CD8-positive, alpha-beta T cell (primary cell): ENCODE measurements at regions of chr11 and their contacts with region 1.

Region 1: DNA sequence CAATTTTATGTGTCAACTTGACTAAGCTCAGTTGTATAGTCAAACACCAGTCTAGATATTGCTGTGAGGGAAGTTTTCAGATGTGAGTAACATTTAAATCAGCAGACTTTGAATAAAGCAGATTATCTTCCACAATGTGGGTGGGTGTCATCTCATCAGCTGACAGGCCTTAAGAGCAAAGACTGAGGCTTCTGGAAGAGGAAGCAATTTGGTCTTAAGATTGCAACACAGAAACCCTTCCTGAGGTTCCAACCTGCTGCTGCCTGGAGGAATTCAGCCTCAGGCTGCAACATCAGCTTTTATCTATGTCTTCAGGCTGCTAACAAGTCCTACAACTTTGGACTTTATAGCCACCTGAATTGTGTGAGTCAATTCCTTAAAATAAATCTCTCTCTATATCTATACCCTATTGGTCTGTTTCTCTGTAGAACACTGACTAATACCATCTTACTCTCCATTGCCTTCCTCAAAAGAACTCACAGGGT is 277.2 kb upstream of the PLET1 start:
- DNase-seq: no peak
- ATAC-seq: no peak
- H3K4me3 ChIP-seq: no peak overlapping the region
- H3K4me3 Mint-ChIP-seq: no peak overlapping the region
- H3K27ac ChIP-seq: no peak overlapping the region
- H3K27ac Mint-ChIP-seq: no peak overlapping the region
- H3K4me1 ChIP-seq: peaks cover 5% of the 10 kb centered on the region
- H3K4me1 Mint-ChIP-seq: peaks cover 15% of the 10 kb centered on the region
- H3K27me3 ChIP-seq: no peaks in the 10 kb centered on the region
- H3K27me3 Mint-ChIP-seq: peaks cover 35% of the 10 kb centered on the region
- CTCF ChIP-seq: no peak

Region 2: DNA sequence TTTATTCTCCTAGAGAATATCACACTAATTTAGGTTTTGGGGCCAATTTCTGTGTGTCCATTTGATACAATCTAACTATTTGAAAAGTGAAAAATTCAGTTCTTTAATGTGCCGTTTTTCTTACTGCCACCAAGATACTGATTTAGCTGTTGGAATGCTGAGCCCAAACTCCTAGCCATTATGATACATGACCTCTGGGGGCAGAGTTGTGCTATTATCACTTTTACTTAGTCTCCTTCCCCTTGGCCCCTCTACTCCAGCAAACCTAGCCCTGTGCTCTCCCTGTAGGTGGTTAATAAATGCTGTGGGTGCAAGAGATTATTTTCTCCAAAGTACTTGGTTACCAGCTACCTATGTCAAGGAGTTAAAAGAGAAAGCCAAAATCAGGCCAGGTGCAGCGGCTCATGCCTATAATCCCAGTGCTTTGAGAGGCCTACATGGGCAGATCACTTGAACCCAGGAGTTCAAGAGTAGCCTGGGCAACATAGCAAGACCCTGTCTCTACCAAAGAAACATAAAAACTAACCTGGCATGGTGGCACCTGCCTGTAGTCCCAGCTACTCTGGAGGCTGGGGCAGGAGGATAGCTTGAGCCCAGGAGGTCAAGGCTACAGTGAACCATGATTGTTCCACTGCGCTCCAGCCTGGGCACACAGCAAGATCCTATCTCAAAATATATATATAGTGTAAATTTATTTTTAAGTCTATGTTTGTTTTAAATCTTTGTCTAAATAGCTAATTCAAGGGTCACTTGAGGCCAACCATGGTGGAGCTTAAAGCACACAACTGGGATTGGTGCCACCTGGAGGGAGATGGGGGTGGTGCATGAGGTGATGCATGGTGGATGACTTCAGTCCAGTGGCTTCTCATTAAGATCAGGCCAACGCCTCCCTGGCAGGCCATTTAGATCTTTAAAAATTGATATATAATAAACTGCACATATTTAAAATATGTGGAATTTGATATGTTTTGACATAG is 84.0 kb before region 1 on chr11:
- CTCF ChIA-PET with region 1: no interaction called
- POLR2A ChIA-PET with region 1: no interaction called
- intact Hi-C with region 1: no loop called
- DNase-seq: peak in 4 of 9 experiments; percentile 31 to 48 (median 36)
- ATAC-seq: no peak
- H3K4me3 ChIP-seq: no peak overlapping the region
- H3K4me3 Mint-ChIP-seq: no peak overlapping the region
- H3K27ac ChIP-seq: no peak overlapping the region
- H3K27ac Mint-ChIP-seq: no peak overlapping the region
- H3K4me1 ChIP-seq: no peaks in the 10 kb centered on the region
- H3K4me1 Mint-ChIP-seq: no peaks in the 10 kb centered on the region
- H3K27me3 ChIP-seq: no peaks in the 10 kb centered on the region
- H3K27me3 Mint-ChIP-seq: peaks cover 5% of the 10 kb centered on the region
- CTCF ChIP-seq: peak; percentile 18

Region 3: DNA sequence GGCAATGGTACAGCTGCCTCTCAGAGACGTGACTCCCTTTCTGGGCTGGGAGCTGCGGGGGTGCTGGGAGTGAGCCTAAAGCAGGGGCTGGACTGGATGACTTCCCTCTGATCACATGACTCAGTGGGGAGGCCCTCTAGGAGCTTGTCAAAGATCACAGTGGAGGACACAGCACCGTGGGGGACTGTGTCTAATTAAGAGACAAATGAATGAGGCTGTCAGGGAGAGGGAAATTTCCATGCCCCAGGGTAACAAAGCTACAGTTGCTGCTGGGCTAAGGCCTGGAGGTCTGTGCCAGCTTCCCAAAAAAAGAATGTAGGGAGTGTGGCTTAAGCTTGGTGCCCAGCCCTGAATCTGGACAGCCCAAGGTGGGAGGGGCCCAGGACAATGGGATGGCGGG is 14.4 kb before region 1 on chr11:
- CTCF ChIA-PET with region 1: no interaction called
- POLR2A ChIA-PET with region 1: no interaction called
- intact Hi-C with region 1: no loop called
- DNase-seq: no peak
- ATAC-seq: no peak
- H3K4me3 ChIP-seq: no peak overlapping the region
- H3K4me3 Mint-ChIP-seq: no peak overlapping the region
- H3K27ac ChIP-seq: no peak overlapping the region
- H3K27ac Mint-ChIP-seq: no peak overlapping the region
- H3K4me1 ChIP-seq: no peaks in the 10 kb centered on the region
- H3K4me1 Mint-ChIP-seq: no peaks in the 10 kb centered on the region
- H3K27me3 ChIP-seq: no peaks in the 10 kb centered on the region
- H3K27me3 Mint-ChIP-seq: peaks cover 13% of the 10 kb centered on the region
- CTCF ChIP-seq: no peak

Region 4: GRCh38 chr11:112555491-112556364 is 17.8 kb after region 1 on chr11:
- CTCF ChIA-PET with region 1: interaction called, 11 read pairs
- POLR2A ChIA-PET with region 1: no interaction called
- intact Hi-C with region 1: no loop called
- DNase-seq: peak; percentile 32 to 74 (median 62)
- ATAC-seq: peak; percentile 62
- H3K4me3 ChIP-seq: no peak overlapping the region
- H3K4me3 Mint-ChIP-seq: no peak overlapping the region
- H3K27ac ChIP-seq: no peak overlapping the region
- H3K27ac Mint-ChIP-seq: no peak overlapping the region
- H3K4me1 ChIP-seq: no peaks in the 10 kb centered on the region
- H3K4me1 Mint-ChIP-seq: no peaks in the 10 kb centered on the region
- H3K27me3 ChIP-seq: no peaks in the 10 kb centered on the region
- H3K27me3 Mint-ChIP-seq: peaks cover 9% of the 10 kb centered on the region
- CTCF ChIP-seq: peak; percentile 52